ENCODE measurements at regions of chr9 and their contacts with region 1.

Region 1: DNA sequence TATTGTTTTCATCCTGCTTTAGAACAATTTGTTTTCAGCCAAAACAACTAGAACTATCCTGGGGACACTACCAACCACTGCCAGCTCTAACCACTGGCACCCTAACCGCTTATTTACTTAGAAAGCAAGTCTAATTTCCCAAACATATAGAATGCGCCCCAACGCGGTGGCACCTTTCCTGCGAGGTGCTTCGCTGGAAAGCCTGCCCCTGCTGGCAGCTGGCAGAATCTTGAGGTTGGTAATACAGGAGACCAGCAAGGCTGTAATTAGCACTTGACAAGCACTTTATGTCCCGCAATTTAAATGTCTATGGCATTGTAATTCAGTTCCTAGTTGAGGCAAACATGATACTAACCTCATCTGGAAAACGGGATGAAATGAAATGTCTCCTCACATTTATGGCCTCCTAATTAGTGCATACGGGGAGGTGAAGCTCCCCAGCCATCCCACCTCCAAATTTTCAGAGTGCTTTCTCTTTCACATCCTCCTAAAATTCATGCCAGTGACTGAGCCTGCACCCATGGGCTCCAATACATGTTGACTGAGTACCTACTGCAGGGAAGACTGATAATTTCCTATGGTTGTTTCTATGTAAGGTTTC is 30.4 kb downstream of the GABBR2 start:
- DNase-seq: no peak
- ATAC-seq: peak; percentile 74
- H3K4me3 ChIP-seq: no peak overlapping the region
- H3K27ac ChIP-seq: no peak overlapping the region
- H3K4me1 ChIP-seq: no peaks in the 10 kb centered on the region
- H3K27me3 ChIP-seq: no peaks in the 10 kb centered on the region; a peak in 3 of 4 replicates
- CTCF ChIP-seq: peak; percentile 47 to 75 (median 63)
- EP300 ChIP-seq: no peak
- POLR2A ChIP-seq: no peak
- RAD21 ChIP-seq: no peak

Region 2: GRCh38 chr9:98225015-98225442 is 453.3 kb before region 1 on chr9:
- CTCF ChIA-PET with region 1: no interaction called
- POLR2A ChIA-PET with region 1: interaction called, 10 read pairs
- RAD21 ChIA-PET with region 1: no interaction called
- SMC1A ChIA-PET with region 1: no interaction called
- in situ Hi-C with region 1: no loop called
- intact Hi-C with region 1: no loop called
- DNase-seq: no peak
- ATAC-seq: no peak
- H3K4me3 ChIP-seq: no peak overlapping the region
- H3K27ac ChIP-seq: no peak overlapping the region
- H3K4me1 ChIP-seq: no peaks in the 10 kb centered on the region
- H3K27me3 ChIP-seq: no peaks in the 10 kb centered on the region
- CTCF ChIP-seq: no peak
- EP300 ChIP-seq: no peak
- POLR2A ChIP-seq: no peak
- RAD21 ChIP-seq: no peak